Right ventricle myocardium inferior (tissue), 1 donor: ENCODE measurements at regions of chr21 and their contacts with region 1.

Region 1: DNA sequence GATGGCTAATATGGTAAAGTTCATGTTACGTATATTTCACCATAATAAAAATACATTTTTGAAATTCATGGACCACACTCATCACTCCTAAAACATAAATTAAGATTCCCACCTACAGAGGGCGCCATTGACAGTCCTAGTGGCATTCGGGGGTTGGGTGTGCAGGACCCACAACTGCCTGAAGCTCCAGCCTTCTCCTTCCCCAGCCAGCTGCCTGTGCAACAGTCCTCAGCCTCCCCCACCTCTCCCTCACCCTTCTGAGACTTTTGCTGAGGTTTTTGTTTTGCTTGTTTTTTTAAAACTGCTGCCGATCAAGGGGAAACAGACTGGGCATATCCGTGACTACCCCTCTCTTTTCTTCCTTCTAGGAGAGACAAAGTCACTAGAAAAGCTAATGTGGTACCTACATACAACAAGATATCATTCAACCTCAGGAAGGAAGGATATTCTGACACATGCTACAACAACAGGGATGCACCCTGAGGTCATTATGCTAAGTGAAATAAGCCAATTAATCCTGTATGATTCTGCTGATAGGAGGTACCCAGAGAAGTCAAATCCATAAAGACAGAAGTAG is 9.2 kb upstream of the EVA1C start:
- DNase-seq: peak; percentile 77
- ATAC-seq: peak; percentile 78

Region 2: DNA sequence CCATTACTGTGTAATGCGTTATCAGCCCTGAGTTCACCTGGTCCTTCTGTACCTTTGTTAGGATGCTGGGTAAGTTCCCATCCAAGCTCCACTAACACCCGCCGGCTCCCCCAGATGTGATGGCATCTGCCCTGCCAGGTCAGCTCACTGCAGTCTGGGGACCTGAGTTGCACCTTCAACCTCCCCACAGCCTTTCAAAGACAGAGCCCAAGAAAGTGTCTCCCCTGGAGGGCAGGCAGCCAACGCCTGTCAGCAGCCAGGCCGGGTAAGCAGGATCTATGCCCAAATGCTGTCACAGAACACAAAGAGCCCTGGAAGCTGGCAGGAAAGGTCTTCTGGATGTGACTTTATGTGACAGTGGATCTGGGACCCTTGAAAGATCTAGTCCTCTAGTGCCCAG is 91.0 kb before region 1 on chr21:
- intact Hi-C with region 1: no loop called
- DNase-seq: no peak
- ATAC-seq: peak; percentile 44

Region 3: GRCh38 chr21:32484706-32485380 is 81.6 kb after region 1 on chr21:
- intact Hi-C with region 1: no loop called
- DNase-seq: no peak
- ATAC-seq: peak; percentile 43

Region 4: GRCh38 chr21:32562426-32562825 is 159.1 kb after region 1 on chr21:
- intact Hi-C with region 1: loop called (anchors 2 kb)
- DNase-seq: no peak
- ATAC-seq: peak; percentile 63

Region 5: DNA sequence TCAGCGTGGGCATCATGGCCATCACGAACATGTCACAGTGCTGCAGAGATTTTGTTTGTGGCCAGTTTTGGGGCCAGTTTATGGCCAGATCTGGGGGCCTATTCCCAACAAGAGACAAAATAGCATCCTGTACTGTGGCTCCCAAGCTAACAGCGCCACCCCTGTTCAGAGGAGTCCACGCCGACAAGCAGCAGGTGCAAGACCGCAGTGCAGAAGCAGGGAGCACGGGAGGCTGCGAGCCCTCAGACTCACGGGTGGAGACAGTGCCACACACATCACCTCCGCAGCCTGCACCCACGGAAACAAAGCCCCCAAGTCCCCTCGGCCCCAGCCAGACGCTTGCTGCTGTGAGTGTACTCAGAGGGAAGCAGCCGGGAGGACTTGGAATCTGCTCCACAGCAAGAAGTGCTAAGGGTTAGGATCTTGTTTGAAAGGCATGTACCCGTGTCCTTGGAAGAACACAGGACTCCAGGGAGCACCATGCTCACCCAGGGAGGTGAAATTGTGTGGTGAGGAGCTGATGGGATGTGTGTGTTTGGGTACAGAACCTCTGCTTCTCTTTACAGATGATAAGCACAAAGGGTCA is 174.9 kb after region 1 on chr21:
- intact Hi-C with region 1: no loop called
- DNase-seq: no peak
- ATAC-seq: no peak

Region 6: GRCh38 chr21:32597205-32597604 is 193.9 kb after region 1 on chr21:
- intact Hi-C with region 1: loop called (anchors 1 kb)
- DNase-seq: no peak
- ATAC-seq: no peak

Region 7: GRCh38 chr21:32666258-32666657 is 263.0 kb after region 1 on chr21:
- intact Hi-C with region 1: no loop called
- DNase-seq: no peak
- ATAC-seq: no peak